H1 (cell line): ENCODE measurements at regions of chr5 and their contacts with region 1.

Region 1: GRCh38 chr5:100777680-100778281 is 125.3 kb downstream of the ST8SIA4 start:
- DNase-seq: no peak
- H3K4me3 ChIP-seq: no peak overlapping the region
- H3K27ac ChIP-seq: no peak overlapping the region
- H3K4me1 ChIP-seq: peaks cover 0 to 2% (median under 1%) of the 10 kb centered on the region in 4 experiments; a peak in 2 of 7 replicates
- H3K27me3 ChIP-seq: no peaks in the 10 kb centered on the region
- CTCF ChIP-seq: no peak
- EP300 ChIP-seq: no peak
- POLR2A ChIP-seq: no peak
- RAD21 ChIP-seq: no peak

Region 2: DNA sequence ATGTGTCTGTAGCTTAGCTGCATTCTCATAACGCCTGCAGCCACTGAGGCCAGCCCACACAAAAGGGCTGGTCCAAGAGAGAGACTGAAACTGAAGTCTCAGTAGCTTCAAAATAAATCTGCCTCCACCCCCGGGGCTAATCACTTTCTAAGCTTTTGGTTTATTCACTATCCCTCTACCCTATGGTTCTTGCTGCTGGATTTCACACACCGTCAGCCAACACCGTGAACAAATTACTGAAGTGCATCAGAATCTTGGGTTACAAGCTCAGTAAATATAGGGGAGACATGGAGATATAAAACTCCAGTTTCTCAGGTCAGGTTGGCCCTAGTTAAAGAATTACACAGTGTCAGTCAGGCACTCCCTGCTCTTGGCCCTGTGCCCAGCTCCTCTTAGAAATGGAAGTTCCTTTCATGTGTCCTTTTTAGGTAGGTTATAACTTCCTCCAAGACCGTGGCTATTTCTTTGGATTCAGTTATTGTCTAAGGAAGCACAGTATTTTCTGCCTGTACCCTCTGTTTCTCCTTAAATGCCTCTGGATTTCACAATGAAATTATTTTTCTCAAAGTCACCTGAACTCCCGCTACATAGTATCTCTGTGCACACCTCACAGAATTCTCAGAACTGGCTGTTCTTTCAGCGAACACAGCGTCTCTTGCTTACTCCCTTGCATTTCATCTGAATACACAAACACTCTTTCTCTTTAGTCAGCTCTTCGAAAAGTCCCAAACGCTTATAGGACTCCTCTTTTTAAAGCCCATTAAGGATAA is 130.1 kb before region 1 on chr5:
- CTCF ChIA-PET with region 1: no interaction called
- POLR2A ChIA-PET with region 1: no interaction called
- DNase-seq: no peak
- H3K4me3 ChIP-seq: no peak overlapping the region
- H3K27ac ChIP-seq: no peak overlapping the region
- H3K4me1 ChIP-seq: peaks cover 0 to 5% (median 2%) of the 10 kb centered on the region in 4 experiments; a peak in 3 of 7 replicates
- H3K27me3 ChIP-seq: no peaks in the 10 kb centered on the region
- CTCF ChIP-seq: no peak
- EP300 ChIP-seq: no peak
- POLR2A ChIP-seq: no peak
- RAD21 ChIP-seq: no peak

Region 3: GRCh38 chr5:100731768-100732167 is 46.0 kb before region 1 on chr5:
- CTCF ChIA-PET with region 1: no interaction called
- POLR2A ChIA-PET with region 1: no interaction called
- DNase-seq: no peak
- H3K4me3 ChIP-seq: no peak overlapping the region
- H3K27ac ChIP-seq: no peak overlapping the region
- H3K4me1 ChIP-seq: no peaks in the 10 kb centered on the region
- H3K27me3 ChIP-seq: no peaks in the 10 kb centered on the region
- CTCF ChIP-seq: no peak
- EP300 ChIP-seq: no peak
- POLR2A ChIP-seq: no peak
- RAD21 ChIP-seq: no peak

Region 4: GRCh38 chr5:100762108-100762507 is 15.7 kb before region 1 on chr5:
- CTCF ChIA-PET with region 1: interaction called, 19 read pairs
- POLR2A ChIA-PET with region 1: no interaction called
- DNase-seq: no peak
- H3K4me3 ChIP-seq: no peak overlapping the region
- H3K27ac ChIP-seq: no peak overlapping the region
- H3K4me1 ChIP-seq: peaks cover 0 to 5% (median 2%) of the 10 kb centered on the region in 4 experiments; a peak in 2 of 7 replicates
- H3K27me3 ChIP-seq: peaks cover 0 to 3% (median 0%) of the 10 kb centered on the region in 4 experiments; a peak in 1 of 7 replicates
- CTCF ChIP-seq: no peak
- EP300 ChIP-seq: no peak
- POLR2A ChIP-seq: no peak
- RAD21 ChIP-seq: no peak

Region 5: DNA sequence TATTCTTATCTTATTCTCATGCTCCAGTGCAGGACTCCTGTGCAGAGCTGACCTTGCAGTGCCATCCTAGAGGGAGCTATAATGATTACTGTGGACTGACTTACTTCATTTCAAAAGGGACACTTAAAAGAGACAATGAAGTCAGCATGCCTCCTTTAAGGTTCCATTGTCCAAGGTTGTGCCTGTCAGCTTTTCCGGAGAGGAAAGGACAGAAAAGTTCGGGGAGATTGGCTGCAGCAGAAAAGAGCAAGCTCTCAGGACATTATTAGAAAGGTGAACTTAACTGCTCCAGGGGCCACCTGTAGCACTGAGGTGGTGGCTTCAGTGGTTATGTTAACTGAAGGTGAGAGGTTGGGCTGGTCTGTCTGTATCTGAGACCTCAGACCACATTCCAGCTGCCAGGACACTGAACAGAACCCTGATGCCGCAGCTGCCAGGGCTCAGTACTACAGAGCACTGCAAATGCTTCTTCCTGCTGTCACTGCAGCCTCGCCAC is 12.4 kb after region 1 on chr5:
- CTCF ChIA-PET with region 1: interaction called, 14 read pairs
- POLR2A ChIA-PET with region 1: no interaction called
- DNase-seq: peak; percentile 29 to 55
- H3K4me3 ChIP-seq: no peak overlapping the region
- H3K27ac ChIP-seq: no peak overlapping the region
- H3K4me1 ChIP-seq: peaks cover 0 to 8% (median 3%) of the 10 kb centered on the region in 4 experiments; a peak in 4 of 7 replicates
- H3K27me3 ChIP-seq: no peaks in the 10 kb centered on the region
- CTCF ChIP-seq: peak in 1 of 3 experiments; percentile 29; a peak in 1 of 4 replicates
- EP300 ChIP-seq: no peak
- POLR2A ChIP-seq: no peak
- RAD21 ChIP-seq: peak in 1 of 2 experiments; percentile 1; a peak in 1 of 4 replicates

Region 6: GRCh38 chr5:100852988-100853449 is 75.2 kb after region 1 on chr5:
- CTCF ChIA-PET with region 1: no interaction called
- POLR2A ChIA-PET with region 1: no interaction called
- DNase-seq: no peak
- H3K4me3 ChIP-seq: no peak overlapping the region
- H3K27ac ChIP-seq: no peak overlapping the region
- H3K4me1 ChIP-seq: no peaks in the 10 kb centered on the region
- H3K27me3 ChIP-seq: no peaks in the 10 kb centered on the region
- CTCF ChIP-seq: no peak
- EP300 ChIP-seq: no peak
- POLR2A ChIP-seq: no peak
- RAD21 ChIP-seq: no peak

Region 7: DNA sequence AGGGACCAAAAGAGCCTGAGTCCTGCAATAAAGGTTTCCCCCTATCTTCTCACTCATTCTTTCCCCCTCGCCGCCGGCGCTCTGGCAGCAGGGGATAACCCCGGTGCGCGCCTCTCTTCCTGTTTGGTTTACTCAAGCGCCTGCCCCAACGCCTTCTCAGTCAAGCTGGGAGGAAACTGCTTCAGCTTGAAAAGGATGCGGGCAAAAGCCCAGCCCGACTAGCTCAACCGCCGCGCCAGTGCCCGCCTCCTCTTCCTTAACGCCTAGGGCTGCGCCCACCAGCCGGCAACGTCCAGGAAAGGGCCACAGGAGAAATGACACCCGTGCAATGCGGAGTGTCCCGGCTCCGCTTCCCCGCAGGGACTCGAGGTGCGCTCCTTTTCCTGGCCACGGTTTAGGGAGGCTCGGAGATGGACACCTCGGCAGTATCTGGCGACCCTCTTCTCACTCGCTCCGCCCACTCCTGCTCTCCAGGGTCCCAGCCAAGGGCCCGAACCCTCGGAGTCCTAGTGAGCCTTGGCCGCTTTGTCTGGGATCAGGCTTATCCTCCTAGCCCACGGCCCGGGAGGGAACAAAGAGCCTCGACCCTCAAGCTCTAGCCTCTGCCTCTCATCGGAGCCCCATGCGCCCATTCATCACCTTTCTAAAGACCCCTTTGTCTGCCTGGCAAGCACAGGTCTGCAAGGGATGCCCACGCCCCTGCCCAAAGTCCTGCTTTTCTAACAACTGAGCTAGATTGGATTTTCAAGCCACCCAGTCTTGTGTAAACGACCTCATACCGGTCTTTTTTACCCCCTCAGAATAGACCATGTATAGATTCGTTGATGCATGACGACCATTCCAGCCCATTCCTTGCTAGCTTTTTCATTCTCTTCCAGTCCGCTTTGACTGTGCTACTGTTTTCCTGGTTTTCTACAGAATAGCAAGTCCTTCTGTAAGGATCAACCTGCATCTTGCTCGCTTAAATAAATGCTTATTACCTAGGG is 123.3 kb after region 1 on chr5:
- CTCF ChIA-PET with region 1: interaction called, 14 read pairs
- POLR2A ChIA-PET with region 1: no interaction called
- DNase-seq: peak in 1 of 2 experiments; percentile 73
- H3K4me3 ChIP-seq: peak overlapping the region; percentile 55 to 74 (median 68)
- H3K27ac ChIP-seq: no peak overlapping the region
- H3K4me1 ChIP-seq: peaks cover 0 to 16% (median 4%) of the 10 kb centered on the region in 4 experiments; a peak in 5 of 7 replicates
- H3K27me3 ChIP-seq: peaks cover 20 to 50% (median 42%) of the 10 kb centered on the region in 4 experiments
- CTCF ChIP-seq: no peak
- EP300 ChIP-seq: no peak
- POLR2A ChIP-seq: 0 out of 3 replicates have a peak, but pooled peaks of 1 of the 2 experiments have one; percentile 31
- RAD21 ChIP-seq: no peak